ENCODE measurements at regions of chrX and their contacts with region 1.

Region 1: GRCh38 chrX:16719334-16720084 is at the start of gene SYAP1:
- DNase-seq: peak; percentile 93
- ATAC-seq: peak; percentile 90
- H3K4me3 ChIP-seq: peak within 1 kb of the TSS; percentile 58 to 91 (median 80)
- H3K4me3 Mint-ChIP-seq: peak within 1 kb of the TSS; percentile 92
- H3K27ac ChIP-seq: peak within 1 kb of the TSS; percentile 92 to 96
- H3K27ac Mint-ChIP-seq: peak within 1 kb of the TSS; percentile 97
- H3K4me1 ChIP-seq: peaks cover 7 to 17% of the 10 kb centered on the region in 2 donors
- H3K4me1 Mint-ChIP-seq: peaks cover 18% of the 10 kb centered on the region
- H3K27me3 ChIP-seq: no peaks in the 10 kb centered on the region
- H3K27me3 Mint-ChIP-seq: no peaks in the 10 kb centered on the region
- CTCF ChIP-seq: no peak
- total RNA-seq, gene SYAP1: 18.0 and 18.3 TPM in 2 replicates

Region 2: GRCh38 chrX:15335135-15336022 is 1384.1 kb before region 1 on chrX and contains the start of gene PIGA:
- CTCF ChIA-PET with region 1: no interaction called
- POLR2A ChIA-PET with region 1: no interaction called
- intact Hi-C with region 1: loop called (anchors 2 kb)
- DNase-seq: peak; percentile 94
- ATAC-seq: peak; percentile 91
- H3K4me3 ChIP-seq: peak within 1 kb of the TSS; percentile 65 to 93 (median 74)
- H3K4me3 Mint-ChIP-seq: peak within 1 kb of the TSS; percentile 92
- H3K27ac ChIP-seq: peak within 1 kb of the TSS; percentile 84 to 95
- H3K27ac Mint-ChIP-seq: peak within 1 kb of the TSS; percentile 94
- H3K4me1 ChIP-seq: peaks cover 4 to 15% of the 10 kb centered on the region in 2 donors
- H3K4me1 Mint-ChIP-seq: peaks cover 20% of the 10 kb centered on the region
- H3K27me3 ChIP-seq: peaks cover 0 to 15% (median 1%) of the 10 kb centered on the region in 4 experiments
- H3K27me3 Mint-ChIP-seq: peaks cover 8% of the 10 kb centered on the region
- CTCF ChIP-seq: no peak
- total RNA-seq, gene PIGA: 25.7 and 26.0 TPM in 2 replicates

Region 3: DNA sequence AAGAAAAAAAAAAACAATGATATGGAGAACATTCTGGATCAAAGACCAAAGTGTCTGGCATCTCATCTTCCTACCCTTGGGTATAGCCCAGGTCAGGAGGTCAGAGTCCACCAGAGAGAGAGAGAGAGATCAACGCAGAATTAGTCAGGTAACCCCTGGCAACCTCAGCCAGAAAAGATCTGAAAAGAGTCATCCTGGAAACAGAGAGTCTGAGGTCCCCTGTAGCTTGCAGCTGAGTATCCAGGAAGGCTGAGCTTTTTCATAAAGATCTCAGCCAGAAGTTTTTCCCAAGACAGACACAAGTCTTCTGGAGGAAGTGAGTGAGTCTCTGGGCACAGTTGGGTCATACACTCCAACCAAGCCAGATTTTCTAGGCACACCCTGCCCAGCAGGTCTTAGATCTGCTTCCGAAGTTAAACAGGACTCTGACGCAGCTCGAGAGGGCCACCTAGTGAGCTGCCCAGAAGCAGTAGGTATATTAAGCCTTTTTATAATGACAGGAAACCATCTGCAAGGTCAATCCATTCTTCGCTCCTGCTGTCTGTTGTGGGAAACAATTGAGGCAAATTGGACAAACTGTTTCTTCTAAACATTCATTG is 1154.4 kb before region 1 on chrX:
- CTCF ChIA-PET with region 1: no interaction called
- POLR2A ChIA-PET with region 1: no interaction called
- intact Hi-C with region 1: no loop called
- DNase-seq: no peak
- ATAC-seq: no peak
- H3K4me3 ChIP-seq: no peak overlapping the region
- H3K4me3 Mint-ChIP-seq: no peak overlapping the region
- H3K27ac ChIP-seq: no peak overlapping the region
- H3K27ac Mint-ChIP-seq: no peak overlapping the region
- H3K4me1 ChIP-seq: no peaks in the 10 kb centered on the region
- H3K4me1 Mint-ChIP-seq: no peaks in the 10 kb centered on the region
- H3K27me3 ChIP-seq: peaks cover 0 to 2% (median 0%) of the 10 kb centered on the region in 4 experiments
- H3K27me3 Mint-ChIP-seq: peaks cover 5% of the 10 kb centered on the region
- CTCF ChIP-seq: no peak

Region 4: GRCh38 chrX:15737960-15738902 is 981.3 kb before region 1 on chrX and contains the start of gene CA5B:
- CTCF ChIA-PET with region 1: no interaction called
- POLR2A ChIA-PET with region 1: no interaction called
- intact Hi-C with region 1: loop called (anchors 1 kb)
- DNase-seq: peak; percentile 95
- ATAC-seq: peak; percentile 94
- H3K4me3 ChIP-seq: peak within 1 kb of the TSS; percentile 17 to 84 (median 72)
- H3K4me3 Mint-ChIP-seq: peak within 1 kb of the TSS; percentile 95
- H3K27ac ChIP-seq: peak within 1 kb of the TSS; percentile 42 to 58
- H3K27ac Mint-ChIP-seq: peak within 1 kb of the TSS; percentile 91
- H3K4me1 ChIP-seq: peaks cover 18 to 19% of the 10 kb centered on the region in 2 donors
- H3K4me1 Mint-ChIP-seq: peaks cover 35% of the 10 kb centered on the region
- H3K27me3 ChIP-seq: no peaks in the 10 kb centered on the region
- H3K27me3 Mint-ChIP-seq: no peaks in the 10 kb centered on the region
- CTCF ChIP-seq: no peak
- total RNA-seq, gene CA5B: 17.2 and 17.7 TPM in 2 replicates

Region 5: GRCh38 chrX:16619024-16619423 is 100.5 kb before region 1 on chrX:
- CTCF ChIA-PET with region 1: no interaction called
- POLR2A ChIA-PET with region 1: no interaction called
- intact Hi-C with region 1: no loop called
- DNase-seq: no peak
- ATAC-seq: no peak
- H3K4me3 ChIP-seq: no peak overlapping the region
- H3K4me3 Mint-ChIP-seq: no peak overlapping the region
- H3K27ac ChIP-seq: no peak overlapping the region
- H3K27ac Mint-ChIP-seq: no peak overlapping the region
- H3K4me1 ChIP-seq: no peaks in the 10 kb centered on the region
- H3K4me1 Mint-ChIP-seq: no peaks in the 10 kb centered on the region
- H3K27me3 ChIP-seq: no peaks in the 10 kb centered on the region
- H3K27me3 Mint-ChIP-seq: no peaks in the 10 kb centered on the region
- CTCF ChIP-seq: no peak

Region 6: GRCh38 chrX:16870095-16870860 is 150.8 kb after region 1 on chrX and contains the start of gene RBBP7:
- CTCF ChIA-PET with region 1: no interaction called
- POLR2A ChIA-PET with region 1: no interaction called
- intact Hi-C with region 1: loop called (anchors 5 kb)
- DNase-seq: peak; percentile 92
- ATAC-seq: peak; percentile 80
- H3K4me3 ChIP-seq: peak within 1 kb of the TSS; percentile 41 to 94 (median 79)
- H3K4me3 Mint-ChIP-seq: peak within 1 kb of the TSS; percentile 93
- H3K27ac ChIP-seq: peak within 1 kb of the TSS; percentile 96 to 99
- H3K27ac Mint-ChIP-seq: peak within 1 kb of the TSS; percentile 98
- H3K4me1 ChIP-seq: peaks cover 26 to 33% of the 10 kb centered on the region in 2 donors
- H3K4me1 Mint-ChIP-seq: peaks cover 43% of the 10 kb centered on the region
- H3K27me3 ChIP-seq: peaks cover 0 to 10% (median 0%) of the 10 kb centered on the region in 4 experiments
- H3K27me3 Mint-ChIP-seq: no peaks in the 10 kb centered on the region
- CTCF ChIP-seq: no peak
- total RNA-seq, gene RBBP7: 106 and 110 TPM in 2 replicates

Region 7: DNA sequence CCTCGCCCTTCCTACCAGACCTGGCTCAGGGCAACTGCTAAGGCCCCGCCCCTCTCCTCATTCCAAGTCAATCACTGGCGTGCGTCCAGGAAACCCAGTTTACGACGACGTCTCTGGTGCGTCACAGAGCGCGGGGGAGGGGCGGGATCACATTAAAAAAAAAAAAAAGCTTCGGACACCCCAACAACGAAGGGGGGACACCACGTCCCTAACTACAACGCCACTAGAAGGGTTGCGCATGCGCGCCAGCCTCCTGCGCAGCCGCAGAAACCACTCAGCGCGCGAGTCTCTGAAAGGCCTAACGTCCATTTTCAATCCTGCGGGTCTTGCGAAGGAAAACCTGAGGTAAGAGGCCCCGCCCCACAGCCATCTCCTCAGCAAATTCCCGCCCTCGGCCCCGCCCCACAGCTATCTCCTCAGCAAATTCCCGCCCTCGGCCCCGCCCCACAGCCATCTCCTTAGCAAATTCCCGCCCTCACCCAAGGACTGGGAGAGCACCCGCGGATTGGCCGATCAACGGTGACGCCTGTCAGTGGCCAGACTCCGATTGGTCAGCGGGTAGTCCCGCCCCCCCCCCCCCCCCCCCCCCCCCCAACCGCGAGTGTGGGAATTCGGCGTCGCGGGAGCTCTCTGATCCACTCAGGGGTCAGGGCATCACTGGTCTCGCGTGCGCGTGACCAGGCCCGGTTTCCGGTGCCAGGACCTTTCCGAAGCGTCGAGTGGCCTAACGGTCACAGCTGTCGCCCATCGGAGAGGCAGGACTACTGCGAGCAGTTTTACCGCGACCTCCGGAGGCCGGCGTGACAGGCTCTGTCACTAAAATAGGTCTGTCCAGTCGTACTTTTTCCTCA is 1017.6 kb after region 1 on chrX and contains the start of gene SCML1:
- CTCF ChIA-PET with region 1: no interaction called
- POLR2A ChIA-PET with region 1: interaction called, 3 read pairs
- intact Hi-C with region 1: loop called (anchors 10 kb)
- DNase-seq: peak; percentile 90
- ATAC-seq: peak; percentile 88
- H3K4me3 ChIP-seq: peak within 1 kb of the TSS; percentile 45 to 73 (median 65)
- H3K4me3 Mint-ChIP-seq: peak within 1 kb of the TSS; percentile 90
- H3K27ac ChIP-seq: peak within 1 kb of the TSS; percentile 75 to 81
- H3K27ac Mint-ChIP-seq: peak within 1 kb of the TSS; percentile 85
- H3K4me1 ChIP-seq: peaks cover 6 to 12% of the 10 kb centered on the region in 2 donors
- H3K4me1 Mint-ChIP-seq: peaks cover 16% of the 10 kb centered on the region
- H3K27me3 ChIP-seq: no peaks in the 10 kb centered on the region
- H3K27me3 Mint-ChIP-seq: peaks cover 6% of the 10 kb centered on the region
- CTCF ChIP-seq: no peak
- total RNA-seq, gene SCML1: 6.7 and 8.3 TPM in 2 replicates

Measured in B cell (primary cell).